Activated T-helper 1 cell treated with anti-CD3 and anti-CD28 coated beads, Interleukin-12 subunit alpha, Interleukin-12 subunit beta, Interleukin-2, Interleukin-4 antibody, amounts not matched to agents 30 ng/mL and 10 ng/mL and 1 ng/mL, durations not matched to agents 14 hours and 24 hours and 36 hours (primary cell): ENCODE measurements at regions of chr3 and their contacts with region 1.

Region 1: DNA sequence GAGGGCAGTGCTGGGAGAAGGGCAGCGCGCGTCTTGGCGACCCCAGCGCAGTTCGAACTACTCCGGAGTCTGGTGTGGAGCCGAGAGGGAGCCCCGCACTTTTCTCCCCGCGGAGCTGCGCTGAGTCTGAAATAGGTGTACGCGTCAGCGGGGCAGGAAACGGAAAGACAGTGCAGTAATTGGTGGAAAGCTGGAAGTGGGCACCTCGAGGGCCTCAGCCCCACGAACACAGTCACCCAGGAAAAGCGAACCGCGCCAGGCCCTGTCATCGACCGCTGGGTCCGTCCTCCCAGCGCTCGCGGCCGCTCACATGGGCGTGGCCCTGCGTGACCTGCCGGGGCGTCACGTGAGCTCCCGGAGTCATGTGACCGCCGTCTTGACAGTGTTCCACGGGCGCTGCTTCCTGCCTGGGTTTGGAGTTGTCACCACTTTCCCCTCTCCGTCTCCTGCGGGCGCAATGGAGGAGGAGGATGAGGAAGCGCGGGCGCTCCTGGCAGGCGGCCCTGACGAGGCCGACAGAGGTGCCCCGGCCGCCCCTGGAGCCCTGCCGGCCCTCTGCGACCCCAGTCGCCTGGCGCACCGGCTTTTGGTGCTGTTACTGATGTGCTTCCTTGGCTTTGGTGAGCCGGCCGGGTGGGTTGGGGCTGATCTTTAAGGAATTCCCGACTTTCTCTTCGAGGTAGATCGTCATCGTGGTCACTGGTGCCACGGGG is at the start of gene MFSD1:
- DNase-seq: peak; percentile 87
- H3K4me3 Mint-ChIP-seq: peak within 1 kb of the TSS; percentile 89
- H3K27ac Mint-ChIP-seq: peak within 1 kb of the TSS; percentile 65
- H3K4me1 Mint-ChIP-seq: peaks cover 17% of the 10 kb centered on the region
- H3K27me3 Mint-ChIP-seq: peaks cover 14% of the 10 kb centered on the region
- total RNA-seq, gene MFSD1: 21.2 and 26.0 TPM in 2 replicates

Region 2: DNA sequence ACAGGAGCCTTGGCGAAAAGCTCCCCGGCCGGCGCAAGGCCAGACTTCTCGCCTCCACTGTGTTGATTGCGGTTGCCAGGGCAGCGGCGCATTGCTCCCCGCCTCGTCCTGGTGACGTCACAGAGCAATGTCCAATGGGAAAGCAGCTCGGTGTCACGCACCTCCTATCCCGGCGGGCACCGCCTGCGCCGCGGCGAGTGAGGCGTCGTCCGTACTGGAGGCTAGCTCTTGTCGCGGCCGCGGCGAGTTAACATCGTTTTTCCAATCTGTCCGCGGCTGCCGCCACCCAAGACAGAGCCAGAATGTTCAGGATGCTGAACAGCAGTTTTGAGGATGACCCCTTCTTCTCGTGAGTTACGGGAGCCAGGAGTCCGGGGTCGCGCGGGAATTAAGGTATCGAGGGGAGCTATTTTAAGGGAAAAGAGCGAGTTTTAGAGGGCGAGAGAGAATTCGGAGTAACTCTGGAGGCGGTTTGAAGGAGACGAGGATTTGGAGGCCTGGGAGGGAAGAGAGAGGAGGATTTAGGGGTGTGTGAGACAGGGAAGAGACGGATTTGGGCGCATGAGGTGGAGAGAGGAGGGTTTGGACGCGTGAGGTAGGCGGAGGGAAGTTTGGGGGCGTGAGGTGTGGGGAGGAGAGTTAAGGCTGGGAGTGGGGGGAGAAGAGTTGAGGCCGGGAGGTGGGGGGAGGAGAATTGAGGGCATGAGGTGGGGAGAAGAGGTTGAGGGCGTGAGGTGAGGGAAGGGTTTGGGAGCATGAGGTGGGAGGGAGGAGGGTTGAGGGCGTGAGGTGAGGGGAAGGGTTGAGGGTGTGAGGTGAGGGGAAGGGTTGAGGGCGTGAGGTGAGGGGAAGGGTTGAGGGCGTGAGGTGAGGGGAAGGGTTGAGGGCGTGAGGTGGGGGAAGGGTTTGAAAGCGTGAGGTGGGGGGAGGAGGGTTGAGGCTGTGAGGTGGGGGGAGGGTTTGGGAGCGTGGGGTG is 230.6 kb before region 1 on chr3 and contains the start of gene MLF1:
- intact Hi-C with region 1: loop called (anchors 5 kb)
- DNase-seq: peak; percentile 80
- H3K4me3 Mint-ChIP-seq: peak within 1 kb of the TSS; percentile 85
- H3K27ac Mint-ChIP-seq: peak within 1 kb of the TSS; percentile 83
- H3K4me1 Mint-ChIP-seq: peaks cover 13% of the 10 kb centered on the region
- H3K27me3 Mint-ChIP-seq: peaks cover 33% of the 10 kb centered on the region
- total RNA-seq, gene MLF1: 0.78 and 0.83 TPM in 2 replicates

Region 3: GRCh38 chr3:158727206-158728060 is 74.4 kb before region 1 on chr3:
- intact Hi-C with region 1: loop called (anchors 2 kb)
- DNase-seq: peak; percentile 36
- H3K4me3 Mint-ChIP-seq: peak overlapping the region; percentile 47
- H3K27ac Mint-ChIP-seq: peak overlapping the region; percentile 6
- H3K4me1 Mint-ChIP-seq: peaks cover 37% of the 10 kb centered on the region
- H3K27me3 Mint-ChIP-seq: no peaks in the 10 kb centered on the region

Region 4: GRCh38 chr3:160754855-160755747 is 1953.2 kb after region 1 on chr3:
- intact Hi-C with region 1: loop called (anchors 5 kb)
- DNase-seq: peak; percentile 84
- H3K4me3 Mint-ChIP-seq: peak overlapping the region; percentile 93
- H3K27ac Mint-ChIP-seq: peak overlapping the region; percentile 98
- H3K4me1 Mint-ChIP-seq: peaks cover 37% of the 10 kb centered on the region
- H3K27me3 Mint-ChIP-seq: peaks cover 40% of the 10 kb centered on the region